Naive thymus-derived CD4-positive, alpha-beta T cell (primary cell): ENCODE measurements at regions of chr13 and their contacts with region 1.

Region 1: GRCh38 chr13:26482451-26483197 is 74.9 kb upstream of the WASF3 start:
- DNase-seq: peak; percentile 27 to 82 (median 69)
- ATAC-seq: peak; percentile 92
- H3K4me3 ChIP-seq: peak overlapping the region; percentile 31
- H3K4me3 Mint-ChIP-seq: peak overlapping the region in 7 of 10 donors; percentile 46 to 60 (median 56)
- H3K27ac ChIP-seq: no peak overlapping the region
- H3K27ac Mint-ChIP-seq: peak overlapping the region; percentile 56 to 90 (median 83)
- H3K4me1 ChIP-seq: peaks cover 15 to 22% of the 10 kb centered on the region in 2 donors
- H3K4me1 Mint-ChIP-seq: peaks cover 4 to 27% (median 20%) of the 10 kb centered on the region in 7 donors
- H3K27me3 ChIP-seq: no peaks in the 10 kb centered on the region
- H3K27me3 Mint-ChIP-seq: no peaks in the 10 kb centered on the region

Region 2: GRCh38 chr13:26498656-26499591 is 16.3 kb after region 1 on chr13:
- CTCF ChIA-PET with region 1: no interaction called
- POLR2A ChIA-PET with region 1: no interaction called
- intact Hi-C with region 1: loop called (anchors 1 to 2 kb)
- DNase-seq: no peak
- ATAC-seq: no peak
- H3K4me3 ChIP-seq: no peak overlapping the region
- H3K4me3 Mint-ChIP-seq: no peak overlapping the region
- H3K27ac ChIP-seq: no peak overlapping the region
- H3K27ac Mint-ChIP-seq: no peak overlapping the region
- H3K4me1 ChIP-seq: no peaks in the 10 kb centered on the region
- H3K4me1 Mint-ChIP-seq: peaks cover 4 to 15% (median 5%) of the 10 kb centered on the region in 7 donors
- H3K27me3 ChIP-seq: no peaks in the 10 kb centered on the region
- H3K27me3 Mint-ChIP-seq: peaks cover 0 to 9% (median 4%) of the 10 kb centered on the region in 5 donors

Region 3: GRCh38 chr13:26698392-26699196 is 216.0 kb after region 1 on chr13:
- CTCF ChIA-PET with region 1: interaction called, 4 read pairs
- POLR2A ChIA-PET with region 1: no interaction called
- intact Hi-C with region 1: loop called (anchors 1 kb)
- DNase-seq: peak; percentile 52 to 81 (median 79)
- ATAC-seq: peak; percentile 89
- H3K4me3 ChIP-seq: no peak overlapping the region
- H3K4me3 Mint-ChIP-seq: peak overlapping the region in 5 of 10 donors; percentile 28 to 45 (median 39)
- H3K27ac ChIP-seq: no peak overlapping the region
- H3K27ac Mint-ChIP-seq: no peak overlapping the region
- H3K4me1 ChIP-seq: no peaks in the 10 kb centered on the region
- H3K4me1 Mint-ChIP-seq: peaks cover 0 to 10% (median 5%) of the 10 kb centered on the region in 7 donors
- H3K27me3 ChIP-seq: no peaks in the 10 kb centered on the region
- H3K27me3 Mint-ChIP-seq: peaks cover 0 to 23% (median 3%) of the 10 kb centered on the region in 5 donors

Region 4: DNA sequence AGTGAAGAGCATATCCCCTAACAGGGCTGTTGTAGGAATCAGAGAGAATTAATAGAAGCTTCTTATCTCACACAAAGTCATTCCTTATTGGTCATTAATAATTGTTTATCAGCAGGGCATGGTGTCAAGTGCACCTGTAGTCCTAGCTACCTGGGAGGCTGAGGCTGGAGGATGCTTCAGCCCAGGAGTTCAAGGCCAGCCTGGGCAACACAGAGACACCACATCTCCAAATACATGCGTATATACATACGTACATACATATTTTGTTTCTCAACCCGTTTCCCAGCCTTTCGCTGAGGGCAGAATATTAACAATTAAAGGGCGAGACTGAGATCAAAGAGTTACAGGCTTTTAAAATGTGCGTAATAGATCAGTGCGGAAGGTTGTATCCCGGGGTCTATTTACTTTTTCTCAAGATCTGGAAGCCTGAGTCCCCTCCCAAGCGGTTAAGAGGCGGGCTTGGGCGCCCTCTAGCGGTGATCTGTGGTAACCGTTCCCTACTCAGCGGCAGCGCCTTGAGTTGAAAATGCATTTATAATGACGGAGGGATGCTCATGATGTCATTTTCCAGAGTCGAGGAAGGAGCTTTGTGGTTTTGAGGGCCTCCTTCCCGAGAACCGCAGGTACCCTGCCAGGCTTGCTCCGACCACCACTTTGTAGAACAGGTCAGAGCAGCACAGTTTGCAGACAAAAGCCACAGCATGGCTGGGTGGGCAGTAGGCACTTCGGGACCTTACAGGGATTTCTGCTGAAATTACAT is 447.5 kb after region 1 on chr13:
- CTCF ChIA-PET with region 1: no interaction called
- POLR2A ChIA-PET with region 1: no interaction called
- intact Hi-C with region 1: loop called in 1 of 2 experiments (anchors 1 kb)
- DNase-seq: peak; percentile 29 to 71 (median 57)
- ATAC-seq: peak; percentile 75
- H3K4me3 ChIP-seq: no peak overlapping the region
- H3K4me3 Mint-ChIP-seq: no peak overlapping the region
- H3K27ac ChIP-seq: no peak overlapping the region
- H3K27ac Mint-ChIP-seq: no peak overlapping the region
- H3K4me1 ChIP-seq: no peaks in the 10 kb centered on the region
- H3K4me1 Mint-ChIP-seq: peaks cover 0 to 4% (median 0%) of the 10 kb centered on the region in 7 donors
- H3K27me3 ChIP-seq: no peaks in the 10 kb centered on the region
- H3K27me3 Mint-ChIP-seq: peaks cover 0 to 15% (median 5%) of the 10 kb centered on the region in 5 donors